CD4-positive, alpha-beta T cell (primary cell): ENCODE measurements at regions of chrX and their contacts with region 1.

Region 1: DNA sequence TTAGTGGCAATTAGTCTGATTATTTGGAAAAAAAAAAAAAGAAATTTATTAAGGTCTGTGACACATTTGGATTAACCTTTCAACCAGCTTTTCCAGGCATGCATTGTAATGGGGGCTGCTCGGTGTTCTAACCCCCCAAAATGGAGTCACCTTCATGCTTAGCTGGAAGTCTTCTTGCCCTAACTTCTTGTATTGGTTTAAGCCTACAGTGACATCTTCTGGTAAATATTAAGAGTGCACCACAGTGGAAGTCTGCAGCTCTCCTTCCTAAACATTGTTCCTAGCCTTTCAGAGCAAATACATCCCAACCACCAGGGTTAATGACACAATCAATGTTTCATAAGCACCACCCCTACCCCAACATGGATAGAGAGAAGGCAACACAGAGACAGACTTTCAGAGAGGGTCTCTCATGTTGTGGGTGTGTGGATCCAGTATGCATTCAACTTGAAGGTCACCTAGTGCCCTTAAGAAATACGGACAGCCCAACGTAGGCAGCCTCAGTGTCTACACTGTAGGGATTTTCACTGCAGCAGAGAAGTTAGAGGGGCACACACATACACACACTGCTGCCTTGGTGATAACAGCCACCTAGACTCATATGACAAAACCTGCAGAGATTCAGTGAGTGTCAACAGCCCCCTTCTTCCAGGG is 142.9 kb upstream of the MBNL3 start:
- DNase-seq: peak in 3 of 14 experiments; percentile 32 to 45 (median 45)
- ATAC-seq: peak; percentile 43
- H3K4me3 ChIP-seq: no peak overlapping the region
- H3K4me3 Mint-ChIP-seq: no peak overlapping the region
- H3K27ac ChIP-seq: no peak overlapping the region
- H3K27ac Mint-ChIP-seq: no peak overlapping the region
- H3K4me1 ChIP-seq: no peaks in the 10 kb centered on the region
- H3K4me1 Mint-ChIP-seq: no peaks in the 10 kb centered on the region
- H3K27me3 ChIP-seq: peaks cover 0 to 5% of the 10 kb centered on the region in 2 experiments
- H3K27me3 Mint-ChIP-seq: no peaks in the 10 kb centered on the region
- CTCF ChIP-seq: peak; percentile 39

Region 2: DNA sequence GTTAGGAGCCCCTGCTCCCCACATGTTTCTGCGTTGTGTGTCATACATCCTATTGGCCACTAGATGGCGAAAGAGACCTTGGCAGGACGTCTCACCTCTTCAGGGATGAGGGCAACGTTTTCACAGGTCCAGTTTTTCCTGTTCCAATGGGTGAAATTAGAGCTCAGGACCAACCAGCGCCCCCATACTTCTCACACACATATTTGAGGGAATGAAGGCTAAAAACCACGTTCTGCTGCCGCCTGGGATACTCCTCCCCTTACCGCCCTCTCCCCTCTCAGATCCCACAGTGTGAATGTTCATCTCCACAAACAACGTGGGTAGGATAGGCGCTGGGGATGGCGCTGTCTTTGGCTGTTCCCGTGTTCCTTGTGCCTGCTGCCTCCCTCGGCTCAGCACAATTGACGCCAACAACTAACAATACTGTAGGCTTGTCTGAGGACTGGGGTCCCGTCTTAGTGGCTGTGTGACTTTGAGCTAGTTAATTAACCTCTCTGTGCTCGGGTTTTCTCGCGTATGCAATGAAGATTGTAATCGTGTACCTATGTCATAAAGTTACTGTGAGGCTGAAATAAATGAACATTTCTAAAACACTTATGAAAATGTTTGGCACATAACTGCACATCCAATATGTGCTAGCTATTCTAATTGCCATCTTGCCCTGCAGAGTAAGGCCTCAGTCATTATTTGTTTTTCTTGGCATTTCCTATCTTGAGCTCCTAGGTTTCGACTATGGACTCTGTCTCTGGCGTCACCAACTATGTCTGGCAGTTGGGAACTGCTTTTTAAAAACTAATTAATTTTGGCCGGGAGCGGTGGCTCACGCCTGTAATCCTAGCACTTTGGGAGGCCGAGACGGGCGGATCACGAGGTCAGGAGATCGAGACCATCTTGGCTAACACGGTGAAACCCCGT is 790.0 kb before region 1 on chrX:
- CTCF ChIA-PET with region 1: no interaction called
- POLR2A ChIA-PET with region 1: no interaction called
- intact Hi-C with region 1: loop called (anchors 5 kb)
- DNase-seq: peak in 7 of 14 experiments; percentile 2 to 72 (median 43)
- ATAC-seq: peak; percentile 64
- H3K4me3 ChIP-seq: no peak overlapping the region
- H3K4me3 Mint-ChIP-seq: no peak overlapping the region
- H3K27ac ChIP-seq: no peak overlapping the region
- H3K27ac Mint-ChIP-seq: no peak overlapping the region
- H3K4me1 ChIP-seq: peaks cover 6% of the 10 kb centered on the region
- H3K4me1 Mint-ChIP-seq: no peaks in the 10 kb centered on the region
- H3K27me3 ChIP-seq: no peaks in the 10 kb centered on the region
- H3K27me3 Mint-ChIP-seq: no peaks in the 10 kb centered on the region
- CTCF ChIP-seq: peak; percentile 63

Region 3: DNA sequence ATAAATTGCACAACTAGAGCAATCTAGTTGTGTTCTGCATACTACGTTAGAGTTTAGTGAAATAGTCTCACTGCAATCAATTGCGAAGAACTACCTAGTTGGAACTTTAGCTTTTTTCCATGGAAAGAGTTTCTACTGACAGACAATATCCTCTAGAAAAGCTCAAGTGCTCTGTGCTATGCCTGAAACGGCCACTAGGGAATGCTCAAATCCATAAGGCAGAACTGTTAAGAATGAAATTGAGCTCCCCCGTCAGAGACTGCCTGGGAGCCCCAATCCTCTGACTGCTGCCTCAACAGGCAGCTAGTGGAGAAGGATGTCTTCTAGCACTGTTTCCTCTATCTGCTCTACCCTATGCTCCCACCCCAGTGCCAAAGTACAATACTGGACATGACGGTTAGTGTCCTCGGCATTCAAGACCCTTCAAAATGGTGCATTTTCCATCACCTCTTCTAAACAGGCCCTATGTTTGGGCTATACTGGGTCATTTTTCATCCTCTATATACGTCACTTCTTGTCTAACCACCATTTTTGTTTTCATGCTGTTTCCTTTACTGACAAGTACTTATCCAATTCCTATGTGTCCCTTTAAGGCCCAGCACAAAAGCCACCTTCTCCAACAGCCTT is 539.2 kb before region 1 on chrX:
- CTCF ChIA-PET with region 1: no interaction called
- POLR2A ChIA-PET with region 1: no interaction called
- intact Hi-C with region 1: loop called in 1 of 2 experiments (anchors 5 kb)
- DNase-seq: peak; percentile 7 to 74 (median 30)
- ATAC-seq: peak; percentile 79
- H3K4me3 ChIP-seq: no peak overlapping the region
- H3K4me3 Mint-ChIP-seq: no peak overlapping the region
- H3K27ac ChIP-seq: no peak overlapping the region
- H3K27ac Mint-ChIP-seq: no peak overlapping the region
- H3K4me1 ChIP-seq: no peaks in the 10 kb centered on the region
- H3K4me1 Mint-ChIP-seq: no peaks in the 10 kb centered on the region
- H3K27me3 ChIP-seq: no peaks in the 10 kb centered on the region
- H3K27me3 Mint-ChIP-seq: no peaks in the 10 kb centered on the region
- CTCF ChIP-seq: peak; percentile 70

Region 4: GRCh38 chrX:132226169-132226568 is 405.5 kb before region 1 on chrX:
- CTCF ChIA-PET with region 1: no interaction called
- POLR2A ChIA-PET with region 1: no interaction called
- intact Hi-C with region 1: loop called (anchors 5 kb)
- DNase-seq: peak in 2 of 14 experiments; percentile 10 to 13
- ATAC-seq: no peak
- H3K4me3 ChIP-seq: no peak overlapping the region
- H3K4me3 Mint-ChIP-seq: no peak overlapping the region
- H3K27ac ChIP-seq: no peak overlapping the region
- H3K27ac Mint-ChIP-seq: no peak overlapping the region
- H3K4me1 ChIP-seq: no peaks in the 10 kb centered on the region
- H3K4me1 Mint-ChIP-seq: peaks cover 7% of the 10 kb centered on the region
- H3K27me3 ChIP-seq: no peaks in the 10 kb centered on the region
- H3K27me3 Mint-ChIP-seq: no peaks in the 10 kb centered on the region
- CTCF ChIP-seq: peak; percentile 13

Region 5: DNA sequence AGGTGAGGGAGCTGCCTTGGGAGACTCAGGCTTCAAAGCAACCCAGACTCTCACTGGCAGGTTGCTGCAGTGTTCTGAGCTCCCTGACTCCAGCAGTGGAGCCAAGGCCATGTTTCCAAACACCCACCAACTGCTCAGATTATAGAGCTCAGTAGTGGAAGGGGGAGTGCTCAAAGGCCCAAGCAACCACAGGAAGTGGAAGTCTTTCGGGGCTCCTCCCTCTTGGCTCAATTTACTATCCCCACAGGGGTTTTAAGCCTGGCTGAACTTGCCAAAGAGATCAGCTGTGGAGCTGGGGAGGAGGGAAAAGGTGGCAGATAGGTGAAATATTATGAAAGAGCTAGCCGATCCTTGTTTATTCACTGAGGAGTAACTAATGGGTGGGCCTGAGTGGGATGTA is 1910.8 kb after region 1 on chrX:
- CTCF ChIA-PET with region 1: no interaction called
- POLR2A ChIA-PET with region 1: no interaction called
- intact Hi-C with region 1: no loop called
- DNase-seq: no peak
- ATAC-seq: no peak
- H3K4me3 ChIP-seq: no peak overlapping the region
- H3K4me3 Mint-ChIP-seq: no peak overlapping the region
- H3K27ac ChIP-seq: no peak overlapping the region
- H3K27ac Mint-ChIP-seq: no peak overlapping the region
- H3K4me1 ChIP-seq: no peaks in the 10 kb centered on the region
- H3K4me1 Mint-ChIP-seq: no peaks in the 10 kb centered on the region
- H3K27me3 ChIP-seq: peaks cover 26 to 41% of the 10 kb centered on the region in 2 experiments
- H3K27me3 Mint-ChIP-seq: peaks cover 24% of the 10 kb centered on the region
- CTCF ChIP-seq: no peak